Mammary epithelial cell (primary cell): ENCODE measurements at regions of chr6 and their contacts with region 1.

Region 1: DNA sequence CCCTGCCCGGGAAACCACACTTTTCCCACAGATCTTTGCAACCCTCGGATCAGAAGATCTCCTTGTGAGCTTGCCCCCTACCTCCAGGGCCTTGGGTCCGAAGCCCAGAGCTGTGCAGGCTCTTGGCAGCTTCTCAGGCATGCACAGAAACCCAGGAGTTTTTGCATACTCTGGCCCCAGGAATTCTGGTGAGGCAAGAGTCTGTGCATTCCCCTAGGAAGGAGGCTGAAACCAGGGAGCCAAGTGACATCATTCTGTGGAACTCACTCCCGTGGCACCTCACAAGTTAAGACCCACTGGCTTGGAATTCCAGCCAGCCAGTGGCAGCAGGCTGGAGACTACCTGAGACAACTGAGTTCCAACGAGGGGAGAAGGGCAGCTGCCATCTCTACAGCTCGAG is 100.1 kb downstream of the TNFRSF21 start:
- DNase-seq: peak; percentile 28
- H3K4me3 ChIP-seq: no peak overlapping the region
- H3K27ac ChIP-seq: no peak overlapping the region
- H3K4me1 ChIP-seq: peaks cover 6% of the 10 kb centered on the region
- H3K27me3 ChIP-seq: no peaks in the 10 kb centered on the region
- CTCF ChIP-seq: no peak

Region 2: DNA sequence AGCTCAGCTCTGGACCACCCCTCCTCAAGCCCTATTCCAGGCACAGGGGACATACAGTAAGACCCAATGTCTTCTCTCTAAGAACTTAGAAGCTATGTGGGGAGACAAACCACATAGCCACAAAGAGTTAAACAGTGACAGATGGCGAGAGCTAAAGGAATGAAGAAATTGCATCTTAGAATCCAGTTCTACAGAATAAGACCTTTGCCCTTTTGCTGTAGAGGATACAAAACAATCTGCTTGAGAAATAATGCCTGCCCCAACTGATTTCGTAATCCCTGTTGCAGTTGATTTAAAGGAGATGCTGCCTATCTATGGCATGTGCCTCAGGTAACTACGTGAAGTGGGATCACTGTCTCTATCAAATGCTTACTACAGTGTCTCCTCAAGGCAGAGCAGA is 68.9 kb after region 1 on chr6:
- CTCF ChIA-PET with region 1: no interaction called
- dilution Hi-C with region 1: no loop called
- in situ Hi-C with region 1: loop called in 1 of 2 experiments (anchors 10 kb)
- intact Hi-C with region 1: no loop called
- DNase-seq: no peak
- H3K4me3 ChIP-seq: no peak overlapping the region
- H3K27ac ChIP-seq: no peak overlapping the region
- H3K4me1 ChIP-seq: peaks cover 7% of the 10 kb centered on the region
- H3K27me3 ChIP-seq: no peaks in the 10 kb centered on the region
- CTCF ChIP-seq: no peak

Region 3: GRCh38 chr6:47292944-47293343 is 83.3 kb after region 1 on chr6:
- CTCF ChIA-PET with region 1: no interaction called
- dilution Hi-C with region 1: loop called (anchors 5 kb)
- in situ Hi-C with region 1: no loop called
- intact Hi-C with region 1: no loop called
- DNase-seq: peak; percentile 60
- H3K4me3 ChIP-seq: no peak overlapping the region
- H3K27ac ChIP-seq: peak overlapping the region; percentile 11
- H3K4me1 ChIP-seq: peaks cover 24% of the 10 kb centered on the region
- H3K27me3 ChIP-seq: no peaks in the 10 kb centered on the region
- CTCF ChIP-seq: no peak